ENCODE measurements at regions of chr7 and their contacts with region 1.

Region 1: DNA sequence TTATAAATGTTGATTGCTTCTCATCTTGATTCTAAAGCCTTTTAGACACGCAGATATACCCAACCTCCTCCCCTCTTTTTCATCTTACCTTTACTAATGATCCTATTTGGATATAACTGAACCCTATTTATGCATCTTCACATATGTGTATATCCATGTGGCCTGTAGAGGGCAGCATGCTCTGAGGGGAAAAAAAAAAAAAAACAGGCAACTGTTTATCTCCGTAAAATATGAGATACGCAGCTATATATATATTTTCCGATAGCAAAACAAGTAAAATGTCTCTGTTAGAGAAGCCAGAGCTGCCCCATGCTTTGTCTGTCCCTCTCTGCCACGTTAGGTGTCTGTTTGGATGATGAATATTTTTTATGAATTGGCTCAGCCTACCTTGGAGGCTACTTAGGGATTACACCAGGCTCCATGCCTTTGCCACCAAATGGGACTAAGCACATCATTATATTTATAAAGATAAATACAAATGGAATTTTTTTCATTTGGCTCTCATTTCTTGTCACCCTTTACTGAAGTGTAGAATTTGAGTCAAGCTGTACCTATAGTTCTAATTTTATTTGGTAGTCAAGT is 174.8 kb upstream of the FZD1 start:
- DNase-seq: no peak
- H3K4me3 ChIP-seq: no peak overlapping the region
- CTCF ChIP-seq: no peak
- POLR2A ChIP-seq: no peak

Region 2: GRCh38 chr7:91636129-91636724 is 546.8 kb after region 1 on chr7:
- intact Hi-C with region 1: loop called (anchors 10 kb)
- DNase-seq: no peak
- H3K4me3 ChIP-seq: no peak overlapping the region
- CTCF ChIP-seq: no peak
- POLR2A ChIP-seq: no peak

Region 3: GRCh38 chr7:91784463-91784862 is 695.0 kb after region 1 on chr7:
- intact Hi-C with region 1: loop called (anchors 10 kb)
- DNase-seq: no peak
- H3K4me3 ChIP-seq: no peak overlapping the region
- CTCF ChIP-seq: no peak
- POLR2A ChIP-seq: no peak

Measured in lower leg skin (tissue), 4 donors.